Activated naive CD4-positive, alpha-beta T cell treated with anti-CD3 and anti-CD28 coated beads for 36 hours (primary cell): ENCODE measurements at regions of chr10 and their contacts with region 1.

Region 1: DNA sequence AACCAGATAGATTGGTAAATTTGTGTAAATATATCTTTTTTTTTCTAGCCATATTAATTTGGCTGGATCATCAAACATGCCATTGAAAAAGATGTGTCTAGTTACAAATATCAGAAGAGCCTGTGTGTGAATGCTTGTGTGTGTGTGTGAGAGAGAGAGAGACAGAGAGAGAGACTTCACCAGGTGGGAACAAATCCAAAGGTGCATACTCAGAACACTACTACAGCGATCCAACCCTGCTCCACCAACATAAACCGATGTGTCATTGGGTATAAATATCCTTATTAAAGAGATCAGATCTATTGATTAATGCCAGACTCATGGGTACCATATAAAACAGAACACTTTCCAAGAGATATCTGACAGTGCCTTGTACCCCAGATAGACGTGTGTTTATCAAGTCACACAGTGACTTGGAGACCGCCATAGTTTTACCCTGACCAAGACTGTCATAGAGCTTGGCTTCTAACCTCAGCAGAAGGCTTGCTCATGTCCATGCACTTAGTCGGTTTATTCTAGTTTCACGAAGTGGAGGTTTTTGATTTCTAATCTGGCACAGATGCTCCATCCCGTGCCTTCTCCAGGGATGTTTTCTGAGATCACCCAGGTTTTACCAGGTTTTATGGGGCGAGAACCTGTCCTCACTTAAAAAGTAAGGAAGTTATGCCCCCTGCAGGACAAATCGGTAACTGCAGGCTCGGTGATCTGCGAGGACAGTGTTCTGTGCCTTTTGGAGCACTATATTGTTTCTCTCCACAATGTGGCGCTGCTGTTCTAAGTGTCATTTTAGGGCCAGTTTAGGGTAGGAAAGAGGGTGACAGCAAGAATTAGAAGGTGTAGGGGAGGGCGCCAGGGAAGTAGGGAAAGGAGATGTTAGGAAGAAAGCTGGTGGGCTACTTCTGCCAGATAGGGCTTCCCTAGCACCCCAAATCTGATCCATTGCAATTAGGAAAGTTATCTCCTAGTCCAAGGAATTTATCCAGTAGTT is 29.3 kb upstream of the WNT8B start:
- DNase-seq: peak; percentile 99
- H3K4me3 Mint-ChIP-seq: no peak overlapping the region
- H3K27ac Mint-ChIP-seq: no peak overlapping the region
- H3K4me1 Mint-ChIP-seq: no peaks in the 10 kb centered on the region
- H3K27me3 Mint-ChIP-seq: no peaks in the 10 kb centered on the region

Region 2: GRCh38 chr10:100229819-100230422 is 203.6 kb before region 1 on chr10:
- CTCF ChIA-PET with region 1: interaction called, 4 read pairs
- intact Hi-C with region 1: loop called (anchors 1 kb)
- DNase-seq: no peak
- H3K4me3 Mint-ChIP-seq: peak overlapping the region; percentile 91
- H3K27ac Mint-ChIP-seq: peak overlapping the region; percentile 90
- H3K4me1 Mint-ChIP-seq: peaks cover 31% of the 10 kb centered on the region
- H3K27me3 Mint-ChIP-seq: no peaks in the 10 kb centered on the region

Region 3: GRCh38 chr10:100318201-100318600 is 115.3 kb before region 1 on chr10:
- CTCF ChIA-PET with region 1: no interaction called
- intact Hi-C with region 1: no loop called
- DNase-seq: no peak
- H3K4me3 Mint-ChIP-seq: no peak overlapping the region
- H3K27ac Mint-ChIP-seq: no peak overlapping the region
- H3K4me1 Mint-ChIP-seq: no peaks in the 10 kb centered on the region
- H3K27me3 Mint-ChIP-seq: peaks cover 13% of the 10 kb centered on the region

Region 4: DNA sequence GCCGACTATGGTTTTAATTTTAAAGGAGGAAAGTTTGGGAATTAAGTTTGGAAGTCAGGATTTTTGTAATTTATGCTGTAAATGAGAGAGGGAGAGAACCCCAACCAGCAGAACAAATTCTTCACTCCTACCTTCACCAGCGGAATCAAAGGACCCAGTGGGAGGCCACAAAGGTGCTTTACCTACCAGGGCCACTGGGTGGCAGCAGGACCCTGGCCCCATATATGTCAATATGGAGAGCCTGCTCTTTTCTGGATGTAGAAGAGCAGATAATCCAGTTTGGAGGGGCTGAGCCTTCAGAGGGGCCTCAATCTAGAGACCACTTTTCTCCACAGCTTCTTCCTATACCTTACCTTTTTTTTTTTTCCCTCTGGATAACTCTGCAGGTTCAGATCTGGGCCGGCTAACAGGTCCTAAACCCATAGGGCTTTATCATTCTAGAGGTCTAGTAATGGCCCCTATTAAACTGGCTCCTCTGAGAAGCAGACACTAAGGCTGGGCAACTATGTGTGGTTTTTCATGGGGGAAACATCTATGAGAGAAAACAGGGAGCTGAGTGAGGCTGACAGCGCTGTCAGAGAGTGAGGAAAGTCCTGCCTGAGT is 95.0 kb before region 1 on chr10:
- CTCF ChIA-PET with region 1: interaction called, 276 read pairs
- intact Hi-C with region 1: loop called (anchors 1 kb)
- DNase-seq: peak; percentile 91
- H3K4me3 Mint-ChIP-seq: no peak overlapping the region
- H3K27ac Mint-ChIP-seq: no peak overlapping the region
- H3K4me1 Mint-ChIP-seq: no peaks in the 10 kb centered on the region
- H3K27me3 Mint-ChIP-seq: no peaks in the 10 kb centered on the region

Region 5: GRCh38 chr10:100481462-100482081 is 48.0 kb after region 1 on chr10:
- CTCF ChIA-PET with region 1: interaction called, 8 read pairs
- intact Hi-C with region 1: loop called (anchors 1 kb)
- DNase-seq: peak; percentile 97
- H3K4me3 Mint-ChIP-seq: peak overlapping the region; percentile 73
- H3K27ac Mint-ChIP-seq: no peak overlapping the region
- H3K4me1 Mint-ChIP-seq: peaks cover 5% of the 10 kb centered on the region
- H3K27me3 Mint-ChIP-seq: peaks cover 9% of the 10 kb centered on the region

Region 6: GRCh38 chr10:100529475-100530298 is 96.1 kb after region 1 on chr10 and contains the start of gene NDUFB8:
- CTCF ChIA-PET with region 1: interaction called, 15 read pairs
- intact Hi-C with region 1: no loop called
- DNase-seq: peak; percentile 95
- H3K4me3 Mint-ChIP-seq: peak within 1 kb of the TSS; percentile 100
- H3K27ac Mint-ChIP-seq: peak within 1 kb of the TSS; percentile 95
- H3K4me1 Mint-ChIP-seq: peaks cover 37% of the 10 kb centered on the region
- H3K27me3 Mint-ChIP-seq: no peaks in the 10 kb centered on the region
- total RNA-seq, gene NDUFB8: 427 to 442 TPM

Region 7: DNA sequence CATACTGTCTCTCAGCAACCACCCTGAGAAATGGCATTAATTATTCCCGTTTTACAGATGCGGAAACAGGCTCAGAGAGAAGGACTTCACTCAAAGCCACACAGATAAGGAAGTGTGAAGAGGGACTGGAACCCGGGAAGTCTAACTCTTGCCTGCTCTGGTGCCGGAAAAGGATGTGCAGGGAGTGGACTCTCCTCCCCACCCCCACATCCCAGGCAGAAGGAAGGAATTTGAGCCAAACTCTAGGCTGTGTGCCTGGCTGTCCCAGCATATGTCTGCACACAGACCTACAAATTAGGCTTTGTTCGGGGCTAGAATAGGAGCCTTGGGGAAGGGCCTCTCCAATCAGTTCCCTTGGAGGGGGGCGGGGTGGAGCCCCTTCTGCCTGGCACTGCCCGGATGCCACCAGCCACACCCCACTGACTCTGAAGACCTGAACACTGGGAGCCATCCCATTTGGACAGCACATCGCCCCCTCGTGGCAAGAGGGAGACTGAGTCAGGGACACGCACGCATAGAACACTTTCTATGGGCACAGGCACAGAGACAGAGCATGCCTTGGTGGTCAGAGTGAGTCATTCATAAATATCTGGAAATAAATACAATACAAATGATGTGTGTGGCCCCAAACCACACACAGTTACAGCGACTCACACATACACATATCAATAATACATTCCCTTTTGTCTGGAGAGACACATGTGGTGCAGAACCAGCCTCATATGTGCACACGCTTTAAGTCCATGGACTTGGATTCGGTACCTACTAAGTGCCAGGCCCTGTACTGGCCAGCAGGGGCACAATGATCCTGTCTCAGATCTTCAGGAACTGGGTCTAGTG is 579.2 kb after region 1 on chr10:
- CTCF ChIA-PET with region 1: no interaction called
- intact Hi-C with region 1: loop called (anchors 1 kb)
- DNase-seq: peak; percentile 85
- H3K4me3 Mint-ChIP-seq: no peak overlapping the region
- H3K27ac Mint-ChIP-seq: no peak overlapping the region
- H3K4me1 Mint-ChIP-seq: peaks cover 12% of the 10 kb centered on the region
- H3K27me3 Mint-ChIP-seq: peaks cover 29% of the 10 kb centered on the region